ENCODE measurements at regions of chr19 and their contacts with region 1.

Region 1: GRCh38 chr19:45643024-45643926 is 4.1 kb upstream of the EML2 start:
- DNase-seq: peak; percentile 84 to 91
- ATAC-seq: peak; percentile 30 to 81 (median 58)
- H3K4me3 ChIP-seq: peak overlapping the region in 5 of 10 donors; percentile 51 to 57 (median 54)
- H3K27ac ChIP-seq: peak overlapping the region in 3 of 10 donors; percentile 74 to 88 (median 85)
- H3K4me1 ChIP-seq: peaks cover 4 to 61% (median 48%) of the 10 kb centered on the region in 9 donors
- H3K27me3 ChIP-seq: peaks cover 0 to 32% (median 0%) of the 10 kb centered on the region in 7 donors
- CTCF ChIP-seq: peak; percentile 94 to 99 (median 98)

Region 2: DNA sequence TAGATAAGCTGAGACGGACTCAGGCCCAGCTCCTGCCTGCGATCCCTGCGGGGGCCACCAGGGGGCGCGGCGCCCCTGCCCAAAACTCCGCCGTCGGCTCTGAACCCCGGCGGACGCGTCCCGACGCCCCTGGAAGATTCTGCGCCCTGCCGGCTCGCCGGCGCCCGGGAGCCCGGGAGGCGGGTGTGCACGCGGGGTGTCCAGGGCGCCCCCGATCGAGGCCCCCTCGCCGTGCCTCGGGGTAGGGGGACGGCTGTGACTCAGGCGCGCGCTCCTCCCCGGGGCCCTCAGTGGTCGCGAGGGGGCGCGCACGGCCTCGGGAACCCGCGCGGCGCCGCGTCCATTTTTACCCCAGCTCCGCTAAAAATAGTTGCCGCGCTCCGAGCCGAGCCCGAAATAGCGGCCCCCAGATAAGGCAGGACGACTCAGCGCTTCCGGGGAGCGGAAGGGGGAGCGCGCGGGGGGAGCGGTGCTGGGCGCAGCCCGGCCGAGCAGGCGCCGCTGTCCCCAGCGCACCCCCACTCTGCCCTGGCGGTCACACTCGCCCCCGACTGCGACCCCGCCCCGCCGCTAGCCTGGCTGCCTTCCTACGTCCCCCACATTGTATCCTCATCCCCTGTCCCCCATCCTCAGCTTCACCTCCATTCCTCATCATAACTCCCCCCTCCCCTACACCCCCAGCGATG is 203.6 kb before region 1 on chr19:
- intact Hi-C with region 1: loop called in 2 of 10 experiments (anchors 5 to 10 kb)
- DNase-seq: peak; percentile 90
- ATAC-seq: peak; percentile 56 to 83 (median 70)
- H3K4me3 ChIP-seq: peak overlapping the region; percentile 4 to 77 (median 69)
- H3K27ac ChIP-seq: peak overlapping the region; percentile 88 to 99 (median 94)
- H3K4me1 ChIP-seq: peaks cover 0 to 42% (median 26%) of the 10 kb centered on the region in 9 donors
- H3K27me3 ChIP-seq: no peaks in the 10 kb centered on the region
- CTCF ChIP-seq: peak; percentile 99 to 100 (median 99)

Region 3: GRCh38 chr19:45523642-45524256 is 119.5 kb before region 1 on chr19:
- intact Hi-C with region 1: loop called (anchors 1 to 5 kb)
- DNase-seq: peak; percentile 70 to 86
- ATAC-seq: peak; percentile 89 to 96 (median 92)
- H3K4me3 ChIP-seq: no peak overlapping the region
- H3K27ac ChIP-seq: peak overlapping the region in 8 of 10 donors; percentile 13 to 69 (median 52)
- H3K4me1 ChIP-seq: peaks cover under 1 to 73% (median 12%) of the 10 kb centered on the region in 9 donors
- H3K27me3 ChIP-seq: no peaks in the 10 kb centered on the region
- CTCF ChIP-seq: peak; percentile 88 to 92 (median 91)

Region 4: GRCh38 chr19:45607071-45608029 is 35.9 kb before region 1 on chr19:
- intact Hi-C with region 1: loop called (anchors 2 to 5 kb)
- DNase-seq: peak; percentile 81 to 87
- ATAC-seq: peak; percentile 83 to 91 (median 87)
- H3K4me3 ChIP-seq: peak overlapping the region in 8 of 10 donors; percentile 17 to 53 (median 43)
- H3K27ac ChIP-seq: peak overlapping the region in 9 of 10 donors; percentile 36 to 83 (median 73)
- H3K4me1 ChIP-seq: peaks cover 4 to 15% (median 13%) of the 10 kb centered on the region in 9 donors
- H3K27me3 ChIP-seq: peaks cover 0 to 22% (median 9%) of the 10 kb centered on the region in 7 donors
- CTCF ChIP-seq: peak; percentile 82 to 94 (median 91)

Region 5: GRCh38 chr19:45730389-45731288 is 87.4 kb after region 1 on chr19 and contains the start of gene FBXO46:
- intact Hi-C with region 1: no loop called
- DNase-seq: peak; percentile 95 to 99
- ATAC-seq: peak; percentile 97 to 99 (median 99)
- H3K4me3 ChIP-seq: peak within 1 kb of the TSS; percentile 43 to 84 (median 78)
- H3K27ac ChIP-seq: peak within 1 kb of the TSS in 8 of 10 donors; percentile 41 to 85 (median 73)
- H3K4me1 ChIP-seq: peaks cover 2 to 28% (median 16%) of the 10 kb centered on the region in 9 donors
- H3K27me3 ChIP-seq: no peaks in the 10 kb centered on the region
- CTCF ChIP-seq: peak in 2 of 9 donors; percentile 10 to 14
- total RNA-seq, gene FBXO46: 5.2 to 13.5 (median 9.1) TPM

Region 6: GRCh38 chr19:45939792-45940514 is 296.7 kb after region 1 on chr19:
- intact Hi-C with region 1: no loop called
- DNase-seq: no peak
- ATAC-seq: peak in 1 of 8 donors; percentile 26
- H3K4me3 ChIP-seq: peak overlapping the region in 2 of 10 donors; percentile 8 to 14
- H3K27ac ChIP-seq: peak overlapping the region in 1 of 10 donors; percentile 21
- H3K4me1 ChIP-seq: peaks cover 0 to 17% (median 0%) of the 10 kb centered on the region in 9 donors
- H3K27me3 ChIP-seq: peaks cover 0 to 55% (median 21%) of the 10 kb centered on the region in 7 donors
- CTCF ChIP-seq: no peak